BJ (cell line): ENCODE measurements at regions of chr1 and their contacts with region 1.

Region 1: GRCh38 chr1:224851210-224851847 is 78.1 kb upstream of the DNAH14 start:
- DNase-seq: no peak
- H3K4me3 ChIP-seq: no peak overlapping the region
- H3K27me3 ChIP-seq: peaks cover 4% of the 10 kb centered on the region; the same call in 1 of the 2 replicates
- CTCF ChIP-seq: peak; percentile 82

Region 2: DNA sequence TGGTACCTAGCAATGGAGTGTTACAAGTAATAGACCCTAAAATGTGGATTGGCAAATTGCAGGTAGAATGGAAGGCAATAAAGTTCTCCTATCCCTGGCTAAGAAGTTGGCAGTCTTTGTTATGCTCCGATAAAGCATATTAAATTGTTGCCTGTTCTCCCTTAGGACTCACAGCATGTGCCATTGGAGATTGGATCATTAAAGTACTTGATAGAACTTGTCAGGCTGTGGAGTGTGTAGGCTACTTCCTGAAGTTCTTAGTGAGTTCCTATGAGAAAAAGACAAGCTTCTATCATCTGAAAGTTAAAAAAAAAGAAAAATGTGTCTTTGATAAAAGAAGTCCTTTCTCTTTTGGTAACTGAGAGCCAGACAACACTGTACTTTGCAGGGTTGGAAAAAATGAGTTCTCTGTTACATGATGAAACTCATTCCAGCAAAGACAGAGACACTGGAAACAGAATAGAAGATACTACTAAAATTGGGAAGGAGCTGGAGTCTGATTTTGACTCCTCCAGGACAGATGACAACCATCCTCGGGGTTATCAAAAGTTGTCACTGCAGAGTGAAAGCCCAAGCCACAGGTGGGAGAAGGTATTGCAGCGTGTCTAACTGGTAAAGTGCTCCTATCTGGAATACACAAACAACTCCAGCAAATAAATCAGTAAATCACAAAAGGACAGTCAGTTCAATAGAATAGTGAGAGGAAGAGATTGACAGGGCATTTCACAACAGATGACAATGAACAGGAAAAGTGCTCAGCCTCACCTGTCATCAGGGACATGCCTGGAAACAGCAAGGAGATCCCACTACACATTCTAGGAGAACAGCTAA is 329.2 kb before region 1 on chr1:
- CTCF ChIA-PET with region 1: interaction called, 255 read pairs
- POLR2A ChIA-PET with region 1: no interaction called
- DNase-seq: no peak
- H3K4me3 ChIP-seq: no peak overlapping the region
- H3K27me3 ChIP-seq: no peaks in the 10 kb centered on the region
- CTCF ChIP-seq: no peak

Region 3: GRCh38 chr1:224644553-224645154 is 206.7 kb before region 1 on chr1:
- CTCF ChIA-PET with region 1: interaction called, 40 read pairs
- POLR2A ChIA-PET with region 1: no interaction called
- DNase-seq: no peak
- H3K4me3 ChIP-seq: no peak overlapping the region
- H3K27me3 ChIP-seq: no peaks in the 10 kb centered on the region
- CTCF ChIP-seq: peak; percentile 94

Region 4: DNA sequence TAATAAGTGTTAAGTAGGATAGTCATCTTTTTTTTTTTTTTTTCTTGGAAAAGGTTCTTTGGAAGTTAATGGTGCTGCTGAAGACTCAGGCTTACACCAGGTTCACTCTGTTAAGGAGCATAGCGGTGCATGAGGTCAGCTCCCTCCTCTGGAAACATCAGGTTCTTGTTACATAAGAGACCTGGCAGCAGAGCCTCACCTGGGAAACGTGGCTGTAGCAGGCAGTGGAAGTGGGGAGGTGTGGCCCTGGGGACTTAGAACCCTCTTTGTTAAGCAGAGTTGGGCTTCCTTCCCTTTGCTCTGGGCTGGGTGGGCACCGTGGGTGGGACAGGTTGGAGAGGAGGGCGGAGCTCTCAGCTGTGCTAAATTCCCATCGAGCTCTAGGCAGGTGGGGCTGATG is 131.1 kb before region 1 on chr1:
- CTCF ChIA-PET with region 1: no interaction called
- POLR2A ChIA-PET with region 1: no interaction called
- DNase-seq: no peak
- H3K4me3 ChIP-seq: no peak overlapping the region
- H3K27me3 ChIP-seq: no peaks in the 10 kb centered on the region
- CTCF ChIP-seq: no peak

Region 5: GRCh38 chr1:224873434-224874369 is 22.4 kb after region 1 on chr1:
- CTCF ChIA-PET with region 1: interaction called, 10 read pairs
- POLR2A ChIA-PET with region 1: no interaction called
- DNase-seq: peak; percentile 53
- H3K4me3 ChIP-seq: no peak overlapping the region
- H3K27me3 ChIP-seq: peaks cover 12% of the 10 kb centered on the region
- CTCF ChIP-seq: no peak

Region 6: GRCh38 chr1:224959115-224959514 is 107.8 kb after region 1 on chr1:
- CTCF ChIA-PET with region 1: no interaction called
- POLR2A ChIA-PET with region 1: no interaction called
- DNase-seq: no peak
- H3K4me3 ChIP-seq: no peak overlapping the region
- H3K27me3 ChIP-seq: no peaks in the 10 kb centered on the region
- CTCF ChIP-seq: no peak